Mammary epithelial cell (primary cell): ENCODE measurements at regions of chr19 and their contacts with region 1.

Region 1: DNA sequence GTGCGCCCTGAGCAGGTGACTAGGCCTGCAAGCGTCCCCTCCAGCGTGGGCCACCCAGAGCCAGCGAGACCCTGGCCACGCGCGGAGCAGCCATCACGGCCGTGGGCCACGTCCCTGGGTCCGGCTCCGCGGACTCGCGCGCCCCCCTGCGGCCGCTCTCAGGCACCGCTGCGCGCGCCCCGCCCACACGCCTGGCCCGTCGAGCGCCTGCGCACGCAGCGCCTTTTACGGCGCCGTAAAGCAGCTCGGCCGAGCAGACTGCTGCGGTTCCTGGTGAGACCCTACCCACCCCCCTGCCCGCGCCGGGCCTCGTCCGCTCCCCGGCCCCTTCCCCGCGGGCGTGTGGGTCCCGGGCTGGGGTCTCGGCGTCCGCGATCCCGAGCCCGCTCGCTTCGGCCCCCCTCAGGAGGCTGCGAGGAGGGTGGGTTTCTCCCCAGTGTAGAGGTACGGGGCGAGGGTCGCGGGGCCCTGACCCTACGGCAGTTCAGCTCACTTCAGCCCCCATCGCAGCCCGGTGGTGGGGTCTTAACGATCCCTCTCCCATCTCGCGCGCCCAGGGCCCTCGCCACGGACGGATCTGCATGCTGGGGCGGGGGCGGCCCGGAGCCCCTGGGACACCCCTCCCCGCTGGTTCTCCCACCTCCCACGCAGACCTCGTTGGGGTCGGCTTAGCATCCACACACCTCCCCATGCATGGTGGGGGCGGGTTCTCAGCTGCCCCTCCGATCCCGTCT is at the start of gene TRAPPC5:
- DNase-seq: peak; percentile 60
- H3K4me3 ChIP-seq: peak within 1 kb of the TSS; percentile 93 to 99 (median 99)
- H3K27ac ChIP-seq: peak within 1 kb of the TSS; percentile 45
- H3K4me1 ChIP-seq: peaks cover 11% of the 10 kb centered on the region
- H3K27me3 ChIP-seq: no peaks in the 10 kb centered on the region
- CTCF ChIP-seq: peak; percentile 71 to 79
- total RNA-seq, gene TRAPPC5: 41.8 to 129 TPM

Region 2: DNA sequence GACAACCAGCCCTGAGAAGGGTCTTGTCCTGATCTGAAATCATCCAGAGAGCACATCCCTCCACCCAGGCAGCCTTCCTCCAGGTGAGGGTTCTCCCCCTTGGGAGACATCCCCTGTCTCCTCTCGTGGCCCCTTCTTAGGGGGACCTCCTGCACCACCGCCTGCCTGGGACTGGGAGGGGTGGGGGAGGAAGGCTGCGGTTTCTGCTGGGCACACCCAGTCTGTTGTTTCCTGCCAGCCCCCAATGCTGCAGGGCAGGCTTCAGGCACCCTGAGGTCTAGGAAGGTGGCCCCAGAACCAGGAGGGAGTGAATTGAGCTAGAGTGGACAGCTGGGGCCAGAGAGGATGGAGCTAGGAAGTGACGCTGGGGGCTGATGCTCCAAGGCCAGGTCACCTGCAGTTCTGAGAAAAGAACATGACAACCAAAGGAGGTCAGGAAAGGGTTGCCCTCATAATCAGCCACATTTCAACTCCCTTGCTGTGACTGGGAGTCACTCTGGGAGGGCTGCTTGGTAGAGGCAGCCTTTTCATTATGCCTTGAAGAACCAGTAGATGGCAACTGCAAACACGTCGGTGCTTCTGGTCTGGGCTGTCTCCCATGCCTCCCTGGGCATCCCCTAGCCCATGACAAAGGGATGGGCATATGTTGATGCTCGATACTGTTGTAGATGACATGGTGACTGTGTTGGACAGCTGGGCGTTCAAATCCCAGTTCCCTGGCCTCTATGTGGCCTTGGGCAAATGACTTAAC is 330.6 kb before region 1 on chr19:
- CTCF ChIA-PET with region 1: no interaction called
- dilution Hi-C with region 1: no loop called
- in situ Hi-C with region 1: loop called in 1 of 2 experiments (anchors 25 kb)
- intact Hi-C with region 1: loop called (anchors 1 kb)
- DNase-seq: no peak
- H3K4me3 ChIP-seq: no peak overlapping the region
- H3K27ac ChIP-seq: no peak overlapping the region
- H3K4me1 ChIP-seq: no peaks in the 10 kb centered on the region
- H3K27me3 ChIP-seq: no peaks in the 10 kb centered on the region
- CTCF ChIP-seq: no peak

Region 3: GRCh38 chr19:7386308-7386707 is 294.5 kb before region 1 on chr19:
- CTCF ChIA-PET with region 1: no interaction called
- dilution Hi-C with region 1: no loop called
- in situ Hi-C with region 1: no loop called
- intact Hi-C with region 1: loop called (anchors 10 kb)
- DNase-seq: no peak
- H3K4me3 ChIP-seq: no peak overlapping the region
- H3K27ac ChIP-seq: no peak overlapping the region
- H3K4me1 ChIP-seq: peaks cover 7% of the 10 kb centered on the region
- H3K27me3 ChIP-seq: no peaks in the 10 kb centered on the region
- CTCF ChIP-seq: peak in 1 of 2 donors; percentile 26

Region 4: DNA sequence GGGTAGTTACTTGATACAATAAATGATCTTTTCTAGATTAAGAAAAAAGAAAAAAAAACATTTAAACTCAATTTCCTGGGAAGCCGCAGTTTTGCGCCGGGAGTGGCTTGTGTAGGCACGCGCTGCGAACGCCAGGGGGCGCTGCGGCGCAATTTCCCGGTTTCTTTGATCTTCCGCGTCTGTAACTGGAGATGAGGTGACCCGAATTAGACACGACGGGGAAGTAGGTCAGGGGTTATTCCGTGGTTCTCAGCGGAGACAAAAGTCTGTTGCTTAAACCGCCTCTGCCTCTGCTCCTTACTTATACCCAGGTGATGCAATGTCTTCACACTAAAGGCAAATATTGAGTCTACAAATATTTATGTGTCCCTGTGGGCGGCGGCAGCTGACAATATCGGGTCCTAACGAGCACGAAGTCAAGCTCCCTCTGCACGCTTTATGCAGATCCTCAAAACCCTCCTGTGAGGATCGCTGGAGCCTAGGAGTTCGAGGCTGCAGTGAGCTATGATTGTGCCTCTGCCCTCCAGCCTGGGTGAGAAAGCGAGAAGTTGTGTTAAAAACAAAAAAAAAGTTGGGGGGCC is 28.6 kb before region 1 on chr19:
- CTCF ChIA-PET with region 1: no interaction called
- dilution Hi-C with region 1: no loop called
- in situ Hi-C with region 1: no loop called
- intact Hi-C with region 1: loop called (anchors 1 kb)
- DNase-seq: peak; percentile 57
- H3K4me3 ChIP-seq: peak overlapping the region in 1 of 3 experiments; percentile 10
- H3K27ac ChIP-seq: no peak overlapping the region
- H3K4me1 ChIP-seq: peaks cover 3% of the 10 kb centered on the region
- H3K27me3 ChIP-seq: no peaks in the 10 kb centered on the region
- CTCF ChIP-seq: peak; percentile 88 to 94

Region 5: GRCh38 chr19:7888145-7888825 is 207.5 kb after region 1 on chr19 and contains the start of gene LRRC8E:
- CTCF ChIA-PET with region 1: no interaction called
- dilution Hi-C with region 1: no loop called
- in situ Hi-C with region 1: no loop called
- intact Hi-C with region 1: no loop called
- DNase-seq: peak; percentile 71
- H3K4me3 ChIP-seq: peak within 1 kb of the TSS; percentile 49 to 68 (median 60)
- H3K27ac ChIP-seq: peak within 1 kb of the TSS; percentile 51
- H3K4me1 ChIP-seq: peaks cover 3% of the 10 kb centered on the region
- H3K27me3 ChIP-seq: no peaks in the 10 kb centered on the region
- CTCF ChIP-seq: no peak
- total RNA-seq, gene LRRC8E: 8.5 to 14.2 TPM